HCT116 (cell line): ENCODE measurements at regions of chr14 and their contacts with region 1.

Region 1: GRCh38 chr14:53306267-53306721 is 153.2 kb upstream of the DDHD1 start:
- DNase-seq: peak; percentile 28
- ATAC-seq: peak; percentile 86
- H3K4me3 ChIP-seq: no peak overlapping the region
- H3K27ac ChIP-seq: no peak overlapping the region
- H3K4me1 ChIP-seq: peaks cover 0 to 5% of the 10 kb centered on the region in 2 experiments; a peak in 1 of 4 replicates
- H3K27me3 ChIP-seq: no peaks in the 10 kb centered on the region
- CTCF ChIP-seq: peak; percentile 59 to 86 (median 64)
- POLR2A ChIP-seq: no peak
- RAD21 ChIP-seq: peak; percentile 89

Region 2: DNA sequence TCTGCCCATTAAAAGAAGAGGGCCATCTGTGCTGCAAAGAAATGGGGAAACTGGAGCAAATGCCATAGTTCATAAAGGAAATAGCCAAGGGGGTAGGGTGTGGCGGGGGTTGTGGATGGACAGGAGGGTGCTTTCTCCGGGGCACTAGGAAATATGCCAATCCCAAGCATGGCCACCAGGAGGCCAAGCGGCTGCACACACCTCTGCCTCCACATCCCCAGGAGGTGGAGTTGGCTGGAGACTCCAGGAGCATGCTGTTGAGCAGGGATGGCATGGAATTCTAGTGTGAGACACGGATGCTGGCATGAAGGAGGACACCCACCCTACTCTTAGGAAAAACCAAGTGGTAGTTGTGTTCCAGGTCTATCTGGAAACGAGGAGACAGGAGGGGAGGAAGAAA is 1262.6 kb before region 1 on chr14:
- CTCF ChIA-PET with region 1: no interaction called
- POLR2A ChIA-PET with region 1: no interaction called
- RAD21 ChIA-PET with region 1: no interaction called
- intact Hi-C with region 1: loop called (anchors 5 kb)
- DNase-seq: peak; percentile 50
- ATAC-seq: peak; percentile 100
- H3K4me3 ChIP-seq: no peak overlapping the region
- H3K27ac ChIP-seq: no peak overlapping the region
- H3K4me1 ChIP-seq: peaks cover 0 to 13% of the 10 kb centered on the region in 2 experiments; a peak in 1 of 4 replicates
- H3K27me3 ChIP-seq: no peaks in the 10 kb centered on the region
- CTCF ChIP-seq: peak; percentile 58 to 82 (median 73); a peak in 5 of 6 replicates
- POLR2A ChIP-seq: no peak
- RAD21 ChIP-seq: peak; percentile 57

Region 3: GRCh38 chr14:52299692-52300278 is 1006.5 kb before region 1 on chr14:
- CTCF ChIA-PET with region 1: no interaction called
- POLR2A ChIA-PET with region 1: no interaction called
- RAD21 ChIA-PET with region 1: no interaction called
- intact Hi-C with region 1: loop called (anchors 10 kb)
- DNase-seq: peak; percentile 31
- ATAC-seq: no peak; the same call in 1 of the 2 replicates
- H3K4me3 ChIP-seq: no peak overlapping the region
- H3K27ac ChIP-seq: no peak overlapping the region
- H3K4me1 ChIP-seq: no peaks in the 10 kb centered on the region
- H3K27me3 ChIP-seq: no peaks in the 10 kb centered on the region
- CTCF ChIP-seq: peak; percentile 56 to 65 (median 65); a peak in 5 of 6 replicates
- POLR2A ChIP-seq: no peak
- RAD21 ChIP-seq: peak; percentile 71

Region 4: GRCh38 chr14:52824507-52824906 is 481.8 kb before region 1 on chr14:
- CTCF ChIA-PET with region 1: interaction called, 9 read pairs
- POLR2A ChIA-PET with region 1: no interaction called
- RAD21 ChIA-PET with region 1: no interaction called
- intact Hi-C with region 1: loop called (anchors 2 kb)
- DNase-seq: no peak
- ATAC-seq: no peak
- H3K4me3 ChIP-seq: no peak overlapping the region
- H3K27ac ChIP-seq: no peak overlapping the region
- H3K4me1 ChIP-seq: 0 out of 4 replicates have a peak, but pooled peaks cover 0 to 2% of the 10 kb centered on the region in 2 experiments
- H3K27me3 ChIP-seq: no peaks in the 10 kb centered on the region
- CTCF ChIP-seq: no peak
- POLR2A ChIP-seq: no peak
- RAD21 ChIP-seq: no peak

Region 5: DNA sequence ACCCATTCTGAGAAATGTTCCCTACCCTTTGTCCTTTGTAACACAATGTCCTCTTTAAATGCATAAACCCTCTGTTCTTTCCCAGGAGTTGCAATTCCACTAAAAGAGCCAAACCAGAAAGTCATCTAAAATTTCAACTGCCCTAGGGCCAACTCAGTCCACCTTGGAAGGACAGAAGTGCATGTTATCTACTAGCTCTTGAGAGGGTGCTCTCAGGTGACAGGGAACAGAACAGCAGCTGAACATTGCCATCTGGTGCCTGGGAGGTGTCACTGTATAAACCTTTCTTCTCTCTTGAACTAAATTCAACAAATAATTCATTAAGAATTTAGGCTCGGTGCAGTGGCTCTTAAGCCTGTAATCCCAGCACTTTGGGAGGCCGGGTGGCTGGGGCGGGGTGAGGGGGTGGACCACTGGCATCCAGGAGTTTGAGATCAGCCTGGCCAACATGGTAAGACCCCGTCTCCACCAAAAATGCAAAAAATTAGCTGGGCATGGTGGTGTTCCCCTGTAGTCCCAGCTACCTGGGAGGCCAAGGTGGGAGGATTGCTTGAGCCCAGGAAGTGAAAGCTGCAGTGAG is 345.1 kb before region 1 on chr14:
- CTCF ChIA-PET with region 1: interaction called, 10 read pairs
- POLR2A ChIA-PET with region 1: no interaction called
- RAD21 ChIA-PET with region 1: no interaction called
- intact Hi-C with region 1: no loop called
- DNase-seq: peak; percentile 58
- ATAC-seq: peak; percentile 98
- H3K4me3 ChIP-seq: no peak overlapping the region
- H3K27ac ChIP-seq: no peak overlapping the region
- H3K4me1 ChIP-seq: 0 out of 4 replicates have a peak, but pooled peaks cover 0 to 6% of the 10 kb centered on the region in 2 experiments
- H3K27me3 ChIP-seq: no peaks in the 10 kb centered on the region
- CTCF ChIP-seq: peak; percentile 69 to 78 (median 71)
- POLR2A ChIP-seq: no peak
- RAD21 ChIP-seq: peak; percentile 89

Region 6: GRCh38 chr14:53055003-53055402 is 251.3 kb before region 1 on chr14:
- CTCF ChIA-PET with region 1: interaction called, 8 read pairs
- POLR2A ChIA-PET with region 1: no interaction called
- RAD21 ChIA-PET with region 1: no interaction called
- intact Hi-C with region 1: loop called (anchors 5 kb)
- DNase-seq: peak; percentile 40
- ATAC-seq: peak; percentile 79
- H3K4me3 ChIP-seq: no peak overlapping the region
- H3K27ac ChIP-seq: no peak overlapping the region
- H3K4me1 ChIP-seq: no peaks in the 10 kb centered on the region
- H3K27me3 ChIP-seq: no peaks in the 10 kb centered on the region
- CTCF ChIP-seq: peak; percentile 56 to 83 (median 69); a peak in 5 of 6 replicates
- POLR2A ChIP-seq: no peak
- RAD21 ChIP-seq: peak; percentile 69

Region 7: DNA sequence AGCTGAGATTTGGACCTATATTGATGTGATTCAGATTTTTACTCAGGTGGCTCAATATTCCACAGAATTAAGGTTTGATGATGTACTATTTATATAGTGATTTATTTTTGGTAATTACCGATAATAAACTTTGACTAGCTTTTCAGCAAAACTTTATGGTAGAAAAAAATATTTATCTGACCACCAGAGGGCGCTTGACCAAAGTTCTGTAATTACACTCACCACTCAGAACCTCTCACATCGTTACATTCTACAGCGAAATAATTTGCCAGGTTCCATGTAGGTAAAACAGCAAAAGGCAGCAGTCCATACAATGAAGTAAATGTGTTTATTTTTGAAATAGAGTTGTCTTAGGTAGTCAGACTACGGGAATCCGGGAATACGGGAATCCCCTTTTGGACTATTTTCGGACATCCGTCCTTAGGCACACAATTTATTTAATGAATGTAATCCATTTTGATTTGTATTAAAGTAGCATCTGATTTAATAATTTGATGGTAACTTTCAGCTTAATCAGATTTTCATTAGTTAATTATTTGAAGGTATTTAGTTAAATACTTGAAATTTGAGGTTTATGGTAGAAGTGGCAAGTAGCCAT is 10.2 kb before region 1 on chr14:
- CTCF ChIA-PET with region 1: interaction called, 31 read pairs
- POLR2A ChIA-PET with region 1: no interaction called
- RAD21 ChIA-PET with region 1: no interaction called
- intact Hi-C with region 1: no loop called
- DNase-seq: peak; percentile 23
- ATAC-seq: peak; percentile 46
- H3K4me3 ChIP-seq: no peak overlapping the region
- H3K27ac ChIP-seq: no peak overlapping the region
- H3K4me1 ChIP-seq: no peaks in the 10 kb centered on the region
- H3K27me3 ChIP-seq: no peaks in the 10 kb centered on the region
- CTCF ChIP-seq: peak; percentile 39 to 78 (median 40); a peak in 5 of 6 replicates
- POLR2A ChIP-seq: no peak
- RAD21 ChIP-seq: peak; percentile 42

Region 8: DNA sequence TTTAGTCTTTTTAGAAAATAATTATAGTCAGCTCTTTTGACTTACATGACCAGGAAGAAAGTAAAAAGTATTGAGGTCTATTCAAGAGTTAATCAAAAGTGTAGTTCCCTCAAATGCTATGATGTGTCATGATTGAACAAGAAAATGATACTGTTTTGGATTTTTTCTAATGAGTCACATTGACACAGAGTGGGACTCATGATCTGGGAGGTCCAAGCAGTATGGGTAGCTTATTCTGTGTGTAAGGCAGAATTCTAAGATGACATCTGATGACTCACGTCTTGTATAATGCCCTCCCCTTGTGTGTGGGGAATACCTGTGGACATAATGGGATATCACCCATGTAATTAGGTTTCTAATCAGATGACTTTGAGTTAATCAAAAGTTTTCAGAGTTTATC is 25.0 kb after region 1 on chr14:
- CTCF ChIA-PET with region 1: no interaction called
- POLR2A ChIA-PET with region 1: no interaction called
- RAD21 ChIA-PET with region 1: no interaction called
- intact Hi-C with region 1: no loop called
- DNase-seq: no peak
- ATAC-seq: peak; percentile 49; the same call in 1 of the 2 replicates
- H3K4me3 ChIP-seq: no peak overlapping the region
- H3K27ac ChIP-seq: no peak overlapping the region
- H3K4me1 ChIP-seq: peaks cover 0 to 18% of the 10 kb centered on the region in 2 experiments; a peak in 2 of 4 replicates
- H3K27me3 ChIP-seq: no peaks in the 10 kb centered on the region
- CTCF ChIP-seq: no peak
- POLR2A ChIP-seq: no peak
- RAD21 ChIP-seq: no peak

Region 9: GRCh38 chr14:53630336-53630735 is 324.0 kb after region 1 on chr14:
- CTCF ChIA-PET with region 1: no interaction called
- POLR2A ChIA-PET with region 1: no interaction called
- RAD21 ChIA-PET with region 1: no interaction called
- intact Hi-C with region 1: no loop called
- DNase-seq: no peak
- ATAC-seq: no peak
- H3K4me3 ChIP-seq: no peak overlapping the region
- H3K27ac ChIP-seq: no peak overlapping the region
- H3K4me1 ChIP-seq: peaks cover 0 to 3% of the 10 kb centered on the region in 2 experiments; a peak in 1 of 4 replicates
- H3K27me3 ChIP-seq: no peaks in the 10 kb centered on the region
- CTCF ChIP-seq: no peak
- POLR2A ChIP-seq: no peak
- RAD21 ChIP-seq: no peak